Mucosa of descending colon (tissue), 3 donors: ENCODE measurements at regions of chr17 and their contacts with region 1.

Region 1: DNA sequence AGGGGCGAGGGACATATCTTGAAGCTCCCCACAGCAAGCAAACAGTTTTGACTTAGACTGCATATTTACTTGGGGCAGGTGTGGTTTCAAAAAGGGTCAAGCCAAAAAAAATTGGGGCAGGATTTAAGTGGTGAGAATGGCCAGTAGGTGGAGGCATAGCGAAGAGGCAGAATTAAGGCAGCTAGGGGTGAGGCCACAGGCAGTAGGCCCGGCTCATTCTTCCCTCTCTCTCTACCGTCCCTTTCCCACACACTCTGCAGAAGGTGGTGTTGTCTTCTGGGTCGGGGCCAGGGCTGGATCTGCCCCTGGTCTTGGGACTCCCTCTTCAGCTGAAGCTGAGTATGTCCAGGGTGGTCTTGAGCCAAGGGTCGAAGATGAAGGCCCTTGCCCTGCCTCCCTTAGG is 2.6 kb downstream of the SHBG start:
- DNase-seq: peak in 1 of 3 donors; percentile 52
- ATAC-seq: peak; percentile 52
- H3K4me3 ChIP-seq: no peak overlapping the region
- H3K4me1 ChIP-seq: peaks cover 3% of the 10 kb centered on the region
- CTCF ChIP-seq: peak; percentile 16

Region 2: DNA sequence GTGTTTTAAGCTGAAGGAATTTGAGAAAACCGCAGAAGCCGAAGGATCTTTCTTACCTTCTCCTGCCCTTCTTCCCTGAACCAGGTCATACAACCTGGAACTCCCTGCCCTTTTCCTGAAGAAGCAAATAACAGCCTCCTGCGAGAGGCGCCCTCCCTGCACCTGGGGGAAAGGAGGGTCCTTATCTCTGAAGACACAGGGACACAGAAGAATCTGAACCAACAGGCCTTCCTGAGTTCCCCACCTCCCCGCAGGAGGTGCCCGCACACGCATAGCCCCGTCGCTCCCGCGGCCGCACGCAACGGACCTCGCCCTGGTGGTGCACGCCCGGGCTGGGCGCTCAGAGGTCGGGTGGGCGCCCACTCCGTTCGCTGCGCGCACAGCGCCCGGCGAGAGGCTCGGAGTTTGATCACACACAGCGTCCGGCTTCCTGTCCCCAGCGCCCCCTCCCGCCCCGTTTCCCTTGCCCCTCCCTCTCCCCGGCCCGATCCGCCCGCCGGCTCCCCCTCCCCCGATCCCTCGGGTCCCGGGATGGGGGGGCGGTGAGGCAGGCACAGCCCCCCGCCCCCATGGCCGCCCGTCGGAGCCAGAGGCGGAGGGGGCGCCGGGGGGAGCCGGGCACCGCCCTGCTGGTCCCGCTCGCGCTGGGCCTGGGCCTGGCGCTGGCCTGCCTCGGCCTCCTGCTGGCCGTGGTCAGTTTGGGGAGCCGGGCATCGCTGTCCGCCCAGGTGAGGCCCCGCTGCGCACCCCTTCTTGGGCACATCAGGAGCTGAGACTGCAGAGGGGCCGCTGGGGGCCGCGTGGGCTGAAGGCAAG is 83.7 kb before region 1 on chr17 and contains the start of gene TNFSF12:
- intact Hi-C with region 1: no loop called
- DNase-seq: peak; percentile 75 to 83 (median 80)
- ATAC-seq: peak; percentile 81
- H3K4me3 ChIP-seq: peak within 1 kb of the TSS; percentile 29
- H3K4me1 ChIP-seq: peaks cover 4% of the 10 kb centered on the region
- CTCF ChIP-seq: no peak
- total RNA-seq, gene TNFSF12: 11.6 to 69.4 (median 15.8) TPM

Region 3: GRCh38 chr17:7687908-7688807 is 55.7 kb after region 1 on chr17 and contains the start of gene WRAP53:
- intact Hi-C with region 1: loop called in 1 of 2 experiments (anchors 10 kb)
- DNase-seq: peak; percentile 96 to 99 (median 98)
- ATAC-seq: peak; percentile 88
- H3K4me3 ChIP-seq: peak within 1 kb of the TSS; percentile 72
- H3K4me1 ChIP-seq: peaks cover 23% of the 10 kb centered on the region
- CTCF ChIP-seq: peak; percentile 99
- total RNA-seq, gene WRAP53: 5.1 to 9.9 (median 5.8) TPM

Region 4: DNA sequence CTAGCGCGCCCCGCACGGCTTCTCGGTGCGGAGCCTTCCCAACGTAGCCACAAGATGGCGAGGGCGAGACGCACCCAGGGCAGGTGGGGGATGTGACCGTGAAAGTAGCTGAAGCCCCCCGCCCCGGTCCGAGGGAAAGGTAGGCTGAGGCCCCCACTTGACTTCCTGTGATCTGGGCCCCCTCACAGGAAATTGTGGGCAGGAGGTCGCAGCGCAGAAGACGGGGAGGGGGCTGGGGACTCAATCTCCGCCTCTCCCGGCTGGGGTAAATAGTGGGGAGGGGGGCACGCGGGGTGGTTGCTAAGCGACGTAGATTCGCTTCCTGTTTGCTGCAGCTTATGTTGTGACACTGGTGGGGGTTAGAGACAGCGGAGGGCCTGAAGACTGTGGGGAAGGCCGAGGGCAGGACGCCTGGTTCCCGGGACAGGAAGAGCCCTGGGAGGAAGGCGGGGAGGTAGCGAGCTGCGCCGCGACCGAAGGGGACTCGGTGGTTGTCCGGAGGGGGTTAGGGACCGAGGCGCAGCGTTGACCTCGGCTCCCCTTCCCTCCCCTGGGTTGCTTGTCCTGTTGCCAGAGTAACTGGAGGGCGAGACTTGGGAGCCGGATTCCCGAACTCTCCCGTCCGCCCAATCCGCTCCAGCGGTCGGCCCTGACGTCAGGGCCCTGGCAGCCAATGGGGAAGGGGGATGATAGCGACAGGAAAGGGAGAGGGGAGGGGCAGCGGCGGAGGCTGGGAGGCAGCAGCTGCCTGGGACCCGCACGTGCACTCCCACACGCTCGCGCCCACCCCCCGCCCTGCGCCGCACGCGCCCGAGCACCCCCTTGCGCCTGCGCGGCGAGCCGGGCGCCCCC is 202.7 kb after region 1 on chr17:
- intact Hi-C with region 1: no loop called
- DNase-seq: peak; percentile 94 to 98 (median 96)
- ATAC-seq: peak; percentile 69
- H3K4me3 ChIP-seq: peak overlapping the region; percentile 42
- H3K4me1 ChIP-seq: peaks cover 45% of the 10 kb centered on the region
- CTCF ChIP-seq: peak; percentile 84